ENCODE measurements at regions of chr19 and their contacts with region 1.

Region 1: DNA sequence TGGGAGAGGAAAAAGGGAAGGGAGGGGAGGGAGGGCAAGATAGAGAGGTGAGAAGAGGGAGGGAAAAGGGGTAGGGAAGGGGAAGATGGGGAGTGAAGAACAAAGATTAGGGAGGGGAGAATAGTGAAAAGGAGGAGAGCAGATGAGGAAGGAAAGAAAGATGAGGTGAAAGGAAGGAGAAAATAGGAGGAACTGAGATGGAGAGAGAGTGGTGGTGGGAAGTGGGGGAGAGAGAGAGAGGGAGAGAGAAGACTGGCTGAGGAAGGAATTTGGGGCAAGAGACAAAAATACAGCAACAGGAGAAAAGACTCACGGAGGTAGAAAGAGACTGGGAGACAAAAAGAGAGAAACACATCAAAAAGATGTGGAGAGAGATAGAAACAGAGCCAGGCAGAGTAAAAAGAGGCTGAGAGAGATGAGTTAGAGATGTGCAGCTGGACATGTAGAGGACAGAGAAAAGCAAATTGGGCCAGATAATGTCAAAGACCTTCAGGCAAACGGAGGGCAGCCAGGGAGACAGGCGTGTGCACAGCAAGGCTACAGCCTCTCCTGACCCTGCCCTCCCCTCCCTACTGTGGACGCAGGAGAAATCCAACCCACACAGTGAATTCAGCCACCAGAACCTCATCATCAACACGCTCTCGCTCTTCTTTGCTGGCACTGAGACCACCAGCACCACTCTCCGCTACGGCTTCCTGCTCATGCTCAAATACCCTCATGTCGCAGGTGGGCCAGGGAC is 49.4 kb upstream of the CYP2B6 start:
- DNase-seq: no peak
- ATAC-seq: no peak
- H3K4me3 Mint-ChIP-seq: no peak overlapping the region
- H3K27ac Mint-ChIP-seq: no peak overlapping the region
- H3K4me1 Mint-ChIP-seq: no peaks in the 10 kb centered on the region
- H3K27me3 Mint-ChIP-seq: peaks cover 25% of the 10 kb centered on the region
- CTCF ChIP-seq: no peak

Region 2: GRCh38 chr19:40897962-40898361 is 43.7 kb before region 1 on chr19:
- CTCF ChIA-PET with region 1: no interaction called
- POLR2A ChIA-PET with region 1: no interaction called
- intact Hi-C with region 1: no loop called
- DNase-seq: no peak
- ATAC-seq: no peak
- H3K4me3 Mint-ChIP-seq: no peak overlapping the region
- H3K27ac Mint-ChIP-seq: no peak overlapping the region
- H3K4me1 Mint-ChIP-seq: no peaks in the 10 kb centered on the region
- H3K27me3 Mint-ChIP-seq: peaks cover 43% of the 10 kb centered on the region
- CTCF ChIP-seq: no peak

Region 3: DNA sequence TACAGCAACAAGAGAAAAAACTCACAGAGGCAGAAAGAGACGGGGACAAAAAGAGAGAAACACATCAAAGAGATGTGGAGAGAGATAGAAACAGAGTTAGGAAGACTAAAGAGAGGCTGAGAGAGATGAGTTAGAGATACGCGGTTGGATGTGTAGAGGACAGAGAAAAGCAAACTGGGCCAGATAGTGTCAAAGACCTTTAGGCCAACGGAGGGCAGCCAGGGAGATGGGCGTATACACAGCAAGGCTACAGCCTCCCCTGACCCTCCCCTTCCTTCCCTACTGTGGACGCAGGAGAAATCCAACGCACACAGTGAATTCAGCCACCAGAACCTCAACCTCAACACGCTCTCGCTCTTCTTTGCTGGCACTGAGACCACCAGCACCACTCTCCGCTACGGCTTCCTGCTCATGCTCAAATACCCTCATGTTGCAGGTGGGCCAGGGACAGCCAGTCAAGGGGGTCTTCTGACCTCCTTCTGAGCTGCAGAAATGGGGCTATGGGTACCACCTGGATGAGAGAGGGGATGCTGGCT is 68.1 kb after region 1 on chr19:
- CTCF ChIA-PET with region 1: no interaction called
- POLR2A ChIA-PET with region 1: no interaction called
- intact Hi-C with region 1: loop called (anchors 5 kb)
- DNase-seq: no peak
- ATAC-seq: no peak
- H3K4me3 Mint-ChIP-seq: no peak overlapping the region
- H3K27ac Mint-ChIP-seq: no peak overlapping the region
- H3K4me1 Mint-ChIP-seq: no peaks in the 10 kb centered on the region
- H3K27me3 Mint-ChIP-seq: peaks cover 36% of the 10 kb centered on the region
- CTCF ChIP-seq: no peak